ENCODE measurements at regions of chr3 and their contacts with region 1.

Region 1: DNA sequence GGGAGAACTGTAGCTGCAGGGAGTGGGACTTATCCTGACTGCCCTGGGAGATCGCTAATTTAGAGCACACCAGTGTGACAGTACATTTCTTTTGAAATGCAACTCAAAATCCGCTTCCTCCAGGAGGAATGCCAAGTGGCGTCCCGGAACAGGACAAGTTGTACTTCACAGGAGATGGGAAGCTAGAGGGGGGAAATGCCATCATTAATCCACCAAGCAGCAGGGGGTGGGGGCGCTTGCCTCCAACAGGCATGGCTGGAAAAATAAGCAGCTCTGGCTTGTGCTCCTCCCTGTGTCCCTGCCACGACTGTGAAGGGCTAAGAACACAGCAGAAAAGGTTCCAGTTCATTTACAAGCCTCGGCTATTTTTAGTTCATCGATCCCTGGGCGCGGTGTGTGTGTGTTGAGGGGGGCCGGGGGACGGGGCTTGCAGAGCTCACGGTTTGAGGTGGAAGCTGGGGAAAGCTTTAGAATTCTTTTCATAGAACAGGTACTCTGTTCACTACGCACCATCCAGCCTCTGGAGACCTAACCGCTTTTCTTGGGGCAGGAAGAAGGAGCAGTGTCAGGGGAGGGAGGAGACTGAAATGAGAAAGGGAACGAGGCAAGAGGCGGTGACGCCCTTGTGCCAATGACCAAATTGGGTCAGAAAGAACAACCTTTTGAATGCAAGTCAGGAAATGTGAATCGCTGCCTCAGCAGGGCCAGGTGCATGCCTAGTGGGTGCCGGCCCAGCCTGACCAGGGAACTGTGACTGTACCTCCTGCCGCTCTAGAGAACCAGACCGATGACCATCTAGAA is 51.8 kb upstream of the DGKG start:
- DNase-seq: peak; percentile 73
- ATAC-seq: peak; percentile 34
- H3K4me3 ChIP-seq: peak overlapping the region; percentile 65
- H3K27ac ChIP-seq: peak overlapping the region; percentile 92
- H3K4me1 ChIP-seq: peaks cover 67% of the 10 kb centered on the region
- H3K27me3 ChIP-seq: no peaks in the 10 kb centered on the region
- CTCF ChIP-seq: no peak

Region 2: DNA sequence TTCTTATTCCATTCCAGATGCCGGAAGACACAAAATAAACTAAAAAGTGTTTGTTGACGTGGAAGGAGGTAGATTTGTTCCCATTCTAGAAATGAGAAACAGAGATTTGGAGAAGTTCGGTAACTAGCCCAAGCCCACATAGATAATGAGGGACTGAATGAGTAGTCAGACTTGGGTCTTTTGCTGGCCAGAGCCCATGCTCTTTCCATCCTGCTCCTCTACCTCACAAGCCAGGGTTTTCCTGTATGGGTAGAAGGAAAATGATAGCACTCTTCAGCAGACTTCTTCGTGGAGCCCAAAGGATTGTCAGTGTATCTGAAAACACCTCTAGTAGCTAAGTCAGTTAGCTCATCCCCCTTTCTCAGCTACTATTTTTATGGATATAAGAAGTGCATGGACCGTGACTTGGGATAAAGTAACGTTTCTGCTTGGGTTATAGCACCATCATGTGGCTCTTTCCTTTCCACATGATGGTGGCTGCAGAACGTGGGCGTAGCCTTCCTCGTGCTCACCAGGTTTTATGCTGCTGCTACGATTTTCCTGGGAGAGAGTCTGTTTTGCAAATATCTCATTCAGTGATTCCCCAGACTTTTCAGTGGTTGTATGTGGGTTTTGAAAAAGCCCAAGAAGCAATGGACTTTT is 136.4 kb before region 1 on chr3:
- CTCF ChIA-PET with region 1: no interaction called
- POLR2A ChIA-PET with region 1: no interaction called
- intact Hi-C with region 1: loop called (anchors 5 kb)
- DNase-seq: peak; percentile 56
- ATAC-seq: peak; percentile 66
- H3K4me3 ChIP-seq: no peak overlapping the region
- H3K27ac ChIP-seq: no peak overlapping the region
- H3K4me1 ChIP-seq: peaks cover 17% of the 10 kb centered on the region
- H3K27me3 ChIP-seq: no peaks in the 10 kb centered on the region
- CTCF ChIP-seq: peak; percentile 57

Region 3: DNA sequence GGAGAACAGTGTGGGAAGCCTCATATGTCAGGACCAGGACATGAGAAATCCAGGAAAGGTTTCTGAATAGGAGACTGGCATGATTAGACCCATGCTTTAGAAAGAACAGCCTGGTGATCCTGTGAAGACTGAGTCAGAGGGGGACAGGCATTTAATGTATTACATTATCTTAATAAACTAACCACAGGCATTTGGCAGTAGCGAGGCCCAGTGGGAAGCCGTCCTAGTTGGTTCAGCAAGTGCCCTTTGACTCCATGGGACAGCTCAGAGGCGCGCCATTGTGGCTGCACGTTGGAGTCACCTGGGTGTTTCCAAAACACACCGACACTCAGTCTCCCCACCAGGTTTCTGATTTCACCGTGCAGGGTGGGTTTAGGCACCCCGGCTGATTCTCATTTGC is 38.7 kb after region 1 on chr3:
- CTCF ChIA-PET with region 1: no interaction called
- POLR2A ChIA-PET with region 1: no interaction called
- intact Hi-C with region 1: loop called (anchors 1 kb)
- DNase-seq: peak; percentile 95
- ATAC-seq: peak; percentile 95
- H3K4me3 ChIP-seq: no peak overlapping the region
- H3K27ac ChIP-seq: peak overlapping the region; percentile 77
- H3K4me1 ChIP-seq: peaks cover 23% of the 10 kb centered on the region
- H3K27me3 ChIP-seq: no peaks in the 10 kb centered on the region
- CTCF ChIP-seq: no peak

Region 4: GRCh38 chr3:186540221-186540834 is 126.5 kb after region 1 on chr3:
- CTCF ChIA-PET with region 1: no interaction called
- POLR2A ChIA-PET with region 1: no interaction called
- intact Hi-C with region 1: loop called (anchors 5 kb)
- DNase-seq: peak; percentile 95
- ATAC-seq: peak; percentile 76
- H3K4me3 ChIP-seq: no peak overlapping the region
- H3K27ac ChIP-seq: peak overlapping the region; percentile 57
- H3K4me1 ChIP-seq: peaks cover 33% of the 10 kb centered on the region
- H3K27me3 ChIP-seq: no peaks in the 10 kb centered on the region
- CTCF ChIP-seq: peak; percentile 95

Region 5: GRCh38 chr3:186570096-186570940 is 156.5 kb after region 1 on chr3 and contains the start of gene DNAJB11:
- CTCF ChIA-PET with region 1: no interaction called
- POLR2A ChIA-PET with region 1: no interaction called
- intact Hi-C with region 1: no loop called
- DNase-seq: peak; percentile 99
- ATAC-seq: peak; percentile 82
- H3K4me3 ChIP-seq: peak within 1 kb of the TSS; percentile 92
- H3K27ac ChIP-seq: peak within 1 kb of the TSS; percentile 48
- H3K4me1 ChIP-seq: peaks cover 16% of the 10 kb centered on the region
- H3K27me3 ChIP-seq: no peaks in the 10 kb centered on the region
- CTCF ChIP-seq: no peak
- total RNA-seq, gene DNAJB11: 117 and 120 TPM in 2 replicates